Activated naive CD4-positive, alpha-beta T cell treated with anti-CD3 and anti-CD28 coated beads for 36 hours (primary cell): ENCODE measurements at regions of chr12 and their contacts with region 1.

Region 1: DNA sequence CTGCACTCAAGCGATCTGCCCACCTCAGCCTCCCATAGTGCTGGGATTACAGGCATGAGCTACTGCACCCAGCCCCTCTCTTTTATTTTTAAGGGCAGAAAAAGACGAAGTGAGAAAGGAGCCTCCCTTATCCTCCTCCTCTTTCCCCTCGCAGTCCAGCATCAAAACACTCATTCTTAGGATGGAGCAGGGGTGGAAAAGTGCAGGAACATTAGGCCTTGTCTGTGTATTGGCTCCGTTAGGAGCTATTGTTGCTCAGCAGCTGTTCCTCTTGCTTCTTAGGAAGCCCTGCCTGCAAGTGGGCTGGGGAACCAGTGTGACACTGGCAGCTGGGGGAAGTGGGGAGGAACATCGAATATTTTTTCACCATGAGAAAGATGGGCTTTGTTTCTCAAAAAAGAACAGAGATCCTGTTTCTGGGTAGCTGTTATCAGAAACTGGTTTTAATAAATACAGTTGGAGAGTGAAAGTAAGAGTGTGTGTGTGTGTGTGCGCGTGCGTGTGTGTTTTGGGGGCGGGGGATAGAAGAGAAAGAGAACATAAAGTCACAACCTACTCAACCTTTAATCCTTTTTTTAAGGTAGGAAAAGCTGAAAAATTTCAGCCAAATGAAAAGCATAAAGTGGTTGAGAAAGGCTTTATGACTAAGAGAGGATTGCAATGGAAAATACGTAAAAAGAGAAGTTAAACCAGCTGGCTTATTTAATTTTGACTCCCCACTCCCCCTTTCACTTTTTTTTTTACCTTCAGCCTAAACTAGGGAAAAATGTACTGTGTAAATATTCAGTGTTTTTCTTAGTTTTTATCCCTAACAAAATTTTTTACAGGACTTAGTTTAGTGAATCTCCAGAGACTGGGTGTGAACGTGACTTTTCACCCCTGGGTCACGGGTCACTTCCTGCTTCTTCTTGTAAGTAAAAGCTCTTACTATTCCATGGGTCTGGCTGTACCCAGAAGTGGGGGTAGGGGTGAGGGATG is 197.2 kb upstream of the PLEKHG7 start:
- DNase-seq: peak; percentile 77
- H3K4me3 Mint-ChIP-seq: peak overlapping the region; percentile 69
- H3K27ac Mint-ChIP-seq: peak overlapping the region; percentile 89
- H3K4me1 Mint-ChIP-seq: peaks cover 56% of the 10 kb centered on the region
- H3K27me3 Mint-ChIP-seq: no peaks in the 10 kb centered on the region

Region 2: DNA sequence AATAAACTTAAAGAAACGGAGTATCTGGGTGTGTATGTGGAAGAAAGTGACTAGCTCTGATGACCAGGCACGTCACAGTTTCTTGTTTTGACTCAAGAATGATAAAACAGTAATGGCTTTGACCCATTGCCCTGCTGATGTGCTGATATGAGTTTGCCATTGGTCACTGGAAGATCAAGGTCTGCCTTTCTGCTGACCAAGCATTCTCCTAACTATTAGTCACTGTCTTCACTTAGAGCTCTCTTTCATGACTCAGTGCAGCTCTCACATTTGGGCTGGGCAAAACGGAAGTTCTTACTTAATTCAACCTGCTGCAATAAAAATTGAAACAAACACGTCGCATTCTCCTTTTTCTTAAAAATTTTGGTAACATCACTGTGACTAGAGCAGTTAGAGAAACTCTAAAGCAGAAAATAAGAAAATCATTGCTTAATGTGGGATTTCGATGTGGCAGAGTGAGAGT is 726.6 kb before region 1 on chr12:
- CTCF ChIA-PET with region 1: interaction called, 4 read pairs
- intact Hi-C with region 1: loop called (anchors 2 kb)
- DNase-seq: peak; percentile 68
- H3K4me3 Mint-ChIP-seq: peak overlapping the region; percentile 58
- H3K27ac Mint-ChIP-seq: peak overlapping the region; percentile 77
- H3K4me1 Mint-ChIP-seq: peaks cover 46% of the 10 kb centered on the region
- H3K27me3 Mint-ChIP-seq: no peaks in the 10 kb centered on the region

Region 3: DNA sequence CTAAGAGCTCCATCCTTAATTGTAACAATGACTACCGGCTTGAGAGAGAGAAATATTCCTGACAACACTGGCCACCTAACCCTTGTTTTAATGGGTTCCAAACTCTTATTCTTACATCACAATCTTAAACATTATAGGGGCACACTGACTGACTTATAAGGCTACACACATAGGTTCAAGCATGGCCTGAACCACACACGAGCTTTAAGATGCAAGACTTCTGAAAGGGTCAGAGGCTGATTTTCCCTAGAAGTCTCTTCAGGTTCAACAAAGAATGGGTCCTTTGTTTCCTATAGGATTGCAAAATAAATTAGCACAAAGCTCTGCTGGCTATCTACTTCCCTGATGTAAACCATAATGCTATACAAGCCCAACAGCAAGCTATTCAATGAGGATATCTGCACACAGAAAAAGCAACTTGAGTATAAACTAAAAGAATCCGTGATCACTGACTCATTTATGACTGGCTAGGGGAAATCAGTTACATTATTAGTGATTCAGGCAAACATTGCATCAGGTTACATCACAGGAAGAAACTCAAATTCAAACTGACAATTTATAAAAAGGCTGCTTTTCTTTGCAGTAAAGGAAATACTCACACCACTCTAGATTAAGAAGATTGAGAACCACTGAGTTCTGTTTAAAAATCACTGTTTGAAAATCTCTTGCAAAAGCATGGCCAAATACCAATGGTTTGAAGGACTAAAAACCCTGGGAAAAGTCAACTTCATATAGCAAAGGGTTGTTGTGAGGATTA is 368.4 kb before region 1 on chr12:
- CTCF ChIA-PET with region 1: interaction called, 6 read pairs
- intact Hi-C with region 1: loop called (anchors 2 kb)
- DNase-seq: no peak
- H3K4me3 Mint-ChIP-seq: peak overlapping the region; percentile 100
- H3K27ac Mint-ChIP-seq: peak overlapping the region; percentile 99
- H3K4me1 Mint-ChIP-seq: peaks cover 58% of the 10 kb centered on the region
- H3K27me3 Mint-ChIP-seq: no peaks in the 10 kb centered on the region

Region 4: GRCh38 chr12:92408072-92408900 is 97.3 kb before region 1 on chr12:
- CTCF ChIA-PET with region 1: interaction called, 11 read pairs
- intact Hi-C with region 1: loop called (anchors 1 kb)
- DNase-seq: peak; percentile 79
- H3K4me3 Mint-ChIP-seq: no peak overlapping the region
- H3K27ac Mint-ChIP-seq: peak overlapping the region; percentile 71
- H3K4me1 Mint-ChIP-seq: peaks cover 64% of the 10 kb centered on the region
- H3K27me3 Mint-ChIP-seq: no peaks in the 10 kb centered on the region

Region 5: DNA sequence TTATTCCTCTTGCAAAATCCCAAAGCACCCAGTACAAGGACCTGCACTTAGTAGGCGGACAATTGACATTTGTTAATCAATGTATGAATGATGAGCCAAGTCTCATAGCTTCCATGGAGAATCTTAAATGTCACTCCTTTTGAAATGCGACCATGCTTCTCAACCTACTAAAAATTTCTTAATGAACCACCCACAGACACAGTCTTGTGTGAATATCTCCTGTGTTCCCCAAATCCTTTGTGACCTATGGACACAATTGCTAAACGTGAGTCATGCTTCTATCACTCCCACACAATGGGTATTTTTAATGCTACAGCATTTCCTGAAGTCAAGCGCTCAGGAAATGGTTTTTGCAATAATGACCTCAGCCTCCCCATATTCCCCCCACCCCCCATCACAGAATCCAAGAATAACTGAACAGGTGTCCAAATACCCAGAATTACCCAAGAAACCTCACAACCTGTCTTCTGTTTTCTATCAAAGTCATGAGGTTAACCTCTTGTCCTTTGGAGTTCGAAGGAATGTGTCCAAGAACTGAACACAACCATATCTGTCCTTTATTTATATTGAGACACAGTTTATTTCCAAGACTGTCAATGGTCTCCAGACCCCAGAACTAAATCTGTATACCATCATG is 33.7 kb after region 1 on chr12:
- CTCF ChIA-PET with region 1: interaction called, 3 read pairs
- intact Hi-C with region 1: loop called (anchors 1 kb)
- DNase-seq: peak; percentile 65
- H3K4me3 Mint-ChIP-seq: no peak overlapping the region
- H3K27ac Mint-ChIP-seq: peak overlapping the region; percentile 97
- H3K4me1 Mint-ChIP-seq: peaks cover 56% of the 10 kb centered on the region
- H3K27me3 Mint-ChIP-seq: no peaks in the 10 kb centered on the region

Region 6: DNA sequence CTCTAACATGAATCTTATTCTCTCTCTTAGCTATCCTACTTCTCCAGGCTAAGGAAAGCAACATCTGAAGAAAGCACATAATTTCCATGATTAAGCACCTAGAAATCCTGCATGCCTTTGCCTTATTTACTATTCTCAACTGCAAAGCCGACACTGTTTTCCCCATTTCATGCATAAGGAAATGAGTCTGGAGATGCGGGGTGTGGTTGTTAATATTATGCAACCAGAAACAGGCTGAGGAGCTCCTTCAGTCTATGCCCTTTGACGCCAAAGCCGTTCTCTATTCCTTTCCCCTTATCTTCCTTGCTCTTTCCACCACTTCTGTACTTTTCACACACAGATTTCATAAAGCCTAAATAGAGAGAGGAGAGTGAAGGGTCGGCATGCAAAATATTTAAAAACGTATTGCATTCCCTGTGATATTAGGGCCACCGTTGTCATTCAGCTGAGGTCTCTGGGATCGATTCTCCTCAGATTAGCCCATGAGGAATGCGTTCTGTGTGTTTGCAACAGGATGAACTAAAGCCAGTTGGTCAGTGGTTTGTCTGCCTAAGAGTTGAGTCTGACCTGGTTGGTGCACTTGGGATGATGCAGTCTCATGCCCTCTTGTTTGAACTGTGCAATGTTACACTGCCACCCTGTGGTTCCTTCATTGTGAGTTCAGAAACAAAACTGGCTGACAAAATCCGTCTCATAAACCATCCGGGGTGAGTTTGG is 144.1 kb after region 1 on chr12:
- CTCF ChIA-PET with region 1: interaction called, 4 read pairs
- intact Hi-C with region 1: loop called (anchors 2 kb)
- DNase-seq: peak; percentile 75
- H3K4me3 Mint-ChIP-seq: no peak overlapping the region
- H3K27ac Mint-ChIP-seq: no peak overlapping the region
- H3K4me1 Mint-ChIP-seq: peaks cover 7% of the 10 kb centered on the region
- H3K27me3 Mint-ChIP-seq: peaks cover 2% of the 10 kb centered on the region